ENCODE measurements at regions of chr2 and their contacts with region 1.

Region 1: DNA sequence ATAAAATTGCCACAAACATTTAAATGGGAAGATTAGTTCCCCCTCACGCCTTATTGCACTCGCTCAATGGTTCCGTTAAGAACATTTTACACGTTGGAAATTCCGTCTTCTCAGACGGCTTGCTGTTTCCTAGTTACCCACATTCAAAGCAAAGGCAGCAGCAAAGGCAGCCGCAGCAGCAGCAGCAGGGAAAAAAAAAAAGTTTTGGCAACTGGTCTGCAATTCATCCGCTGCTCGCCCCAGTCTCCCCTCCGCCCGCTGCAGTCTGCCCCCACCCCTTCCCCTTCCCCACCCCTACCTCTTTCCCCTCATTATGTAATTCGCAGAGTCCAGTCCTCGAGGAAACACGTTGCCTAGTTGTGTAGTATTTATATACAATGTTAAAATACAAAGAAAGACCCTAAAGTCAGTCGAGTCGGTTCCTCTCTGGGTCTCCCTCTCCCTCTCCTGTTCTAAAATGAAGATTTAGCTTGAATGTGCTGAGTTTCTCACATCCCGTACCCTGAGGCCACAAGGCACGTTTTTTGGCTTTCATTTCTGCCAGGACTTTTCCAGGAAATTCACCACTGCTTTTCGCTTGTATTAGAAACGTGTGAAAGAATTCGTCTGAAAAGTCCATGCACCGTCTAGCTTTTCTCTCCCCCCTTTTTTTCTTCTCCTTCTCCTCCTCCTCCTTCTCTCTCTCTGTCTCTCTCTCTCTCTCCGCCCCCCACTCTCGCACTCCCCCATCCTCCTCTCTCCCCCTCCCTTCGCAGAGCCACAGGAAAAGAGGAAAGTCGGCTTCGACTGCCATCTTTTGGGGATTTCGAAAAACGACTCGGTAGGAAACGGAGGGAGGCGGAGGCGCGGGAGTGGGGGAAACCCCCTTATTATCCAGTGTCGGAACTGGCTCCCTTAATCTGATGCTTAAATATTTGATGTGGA is 140.0 kb downstream of the MEIS1 start:
- DNase-seq: peak; percentile 83
- H3K4me3 Mint-ChIP-seq: peak overlapping the region; percentile 78
- H3K27ac Mint-ChIP-seq: peak overlapping the region; percentile 59
- H3K4me1 Mint-ChIP-seq: peaks cover 11% of the 10 kb centered on the region
- H3K27me3 Mint-ChIP-seq: peaks cover 28% of the 10 kb centered on the region
- CTCF ChIP-seq: peak; percentile 51

Region 2: DNA sequence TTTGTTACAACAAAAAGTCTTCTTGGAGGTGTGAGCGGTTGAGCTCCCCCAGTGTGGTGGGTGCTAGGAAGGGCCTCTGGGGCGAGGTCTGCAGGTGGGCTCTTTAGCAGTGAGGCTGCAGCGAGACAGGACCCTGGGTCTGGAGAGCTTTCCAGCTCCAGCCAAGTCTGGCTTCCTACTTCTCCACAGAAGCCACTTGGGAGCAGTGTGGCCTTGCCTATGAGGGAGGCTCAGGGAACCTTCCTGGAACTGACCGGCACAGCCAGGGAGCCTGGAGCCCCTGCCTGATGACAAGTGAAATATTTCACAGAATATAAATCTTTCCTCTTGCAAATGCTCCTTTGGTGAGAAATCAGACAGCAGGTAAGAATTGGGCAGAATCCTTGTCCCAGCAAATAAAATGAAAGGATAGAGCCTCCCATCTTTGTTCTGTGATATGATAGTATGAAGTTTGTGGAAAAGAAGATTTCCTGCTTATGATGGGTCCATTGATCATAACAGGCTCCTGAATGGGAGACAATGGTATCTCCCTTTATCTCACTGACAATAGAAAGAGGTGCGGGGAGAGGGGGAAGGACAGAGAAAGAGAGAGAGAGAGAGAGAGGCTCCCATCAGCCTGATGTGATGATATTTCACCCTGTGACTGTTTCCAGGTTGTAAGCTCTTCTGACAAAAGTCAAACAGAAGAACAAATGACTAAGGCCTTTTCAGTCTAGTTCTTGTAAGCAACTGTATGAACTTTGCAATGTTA is 852.8 kb before region 1 on chr2:
- CTCF ChIA-PET with region 1: no interaction called
- POLR2A ChIA-PET with region 1: no interaction called
- intact Hi-C with region 1: loop called (anchors 2 kb)
- DNase-seq: peak; percentile 35
- H3K4me3 Mint-ChIP-seq: no peak overlapping the region
- H3K27ac Mint-ChIP-seq: no peak overlapping the region
- H3K4me1 Mint-ChIP-seq: no peaks in the 10 kb centered on the region
- H3K27me3 Mint-ChIP-seq: no peaks in the 10 kb centered on the region
- CTCF ChIP-seq: peak; percentile 44

Region 3: GRCh38 chr2:65762068-65762467 is 812.9 kb before region 1 on chr2:
- CTCF ChIA-PET with region 1: no interaction called
- POLR2A ChIA-PET with region 1: no interaction called
- intact Hi-C with region 1: no loop called
- DNase-seq: no peak
- H3K4me3 Mint-ChIP-seq: no peak overlapping the region
- H3K27ac Mint-ChIP-seq: no peak overlapping the region
- H3K4me1 Mint-ChIP-seq: no peaks in the 10 kb centered on the region
- H3K27me3 Mint-ChIP-seq: no peaks in the 10 kb centered on the region
- CTCF ChIP-seq: no peak

Region 4: GRCh38 chr2:66434679-66435548 is 140.0 kb before region 1 on chr2 and contains the start of gene MEIS1:
- CTCF ChIA-PET with region 1: interaction called, 11 read pairs
- POLR2A ChIA-PET with region 1: interaction called, 47 read pairs
- intact Hi-C with region 1: loop called (anchors 1 kb)
- DNase-seq: peak; percentile 94
- H3K4me3 Mint-ChIP-seq: peak within 1 kb of the TSS; percentile 84
- H3K27ac Mint-ChIP-seq: peak within 1 kb of the TSS; percentile 89
- H3K4me1 Mint-ChIP-seq: peaks cover 6% of the 10 kb centered on the region
- H3K27me3 Mint-ChIP-seq: no peaks in the 10 kb centered on the region
- CTCF ChIP-seq: no peak
- total RNA-seq, gene MEIS1: 4.1 and 4.4 TPM in 2 replicates

Region 5: GRCh38 chr2:67234439-67234838 is 659.5 kb after region 1 on chr2:
- CTCF ChIA-PET with region 1: no interaction called
- POLR2A ChIA-PET with region 1: interaction called, 6 read pairs
- intact Hi-C with region 1: loop called (anchors 5 kb)
- DNase-seq: peak; percentile 16
- H3K4me3 Mint-ChIP-seq: no peak overlapping the region
- H3K27ac Mint-ChIP-seq: no peak overlapping the region
- H3K4me1 Mint-ChIP-seq: no peaks in the 10 kb centered on the region
- H3K27me3 Mint-ChIP-seq: no peaks in the 10 kb centered on the region
- CTCF ChIP-seq: peak; percentile 38

Region 6: GRCh38 chr2:67650291-67651133 is 1075.5 kb after region 1 on chr2:
- CTCF ChIA-PET with region 1: no interaction called
- POLR2A ChIA-PET with region 1: interaction called, 6 read pairs
- intact Hi-C with region 1: loop called (anchors 2 kb)
- DNase-seq: peak; percentile 88
- H3K4me3 Mint-ChIP-seq: no peak overlapping the region
- H3K27ac Mint-ChIP-seq: peak overlapping the region; percentile 78
- H3K4me1 Mint-ChIP-seq: peaks cover 25% of the 10 kb centered on the region
- H3K27me3 Mint-ChIP-seq: no peaks in the 10 kb centered on the region
- CTCF ChIP-seq: peak; percentile 84

Region 7: GRCh38 chr2:68362069-68362468 is 1787.1 kb after region 1 on chr2:
- CTCF ChIA-PET with region 1: no interaction called
- POLR2A ChIA-PET with region 1: no interaction called
- intact Hi-C with region 1: no loop called
- DNase-seq: peak; percentile 68
- H3K4me3 Mint-ChIP-seq: no peak overlapping the region
- H3K27ac Mint-ChIP-seq: no peak overlapping the region
- H3K4me1 Mint-ChIP-seq: no peaks in the 10 kb centered on the region
- H3K27me3 Mint-ChIP-seq: no peaks in the 10 kb centered on the region
- CTCF ChIP-seq: peak; percentile 73

Measured in MCF 10A (cell line).